ENCODE measurements at regions of chr4 and their contacts with region 1.

Region 1: GRCh38 chr4:88017516-88018297 is 10.3 kb downstream of the PKD2 start:
- DNase-seq: no peak
- H3K4me3 ChIP-seq: peak overlapping the region in 2 of 4 donors; percentile 24 to 26
- H3K27ac ChIP-seq: peak overlapping the region; percentile 90 to 93 (median 92)
- H3K4me1 ChIP-seq: peaks cover 40 to 100% (median 94%) of the 10 kb centered on the region in 4 donors
- H3K27me3 ChIP-seq: no peaks in the 10 kb centered on the region
- CTCF ChIP-seq: no peak
- EP300 ChIP-seq: no peak
- POLR2A ChIP-seq: no peak

Region 2: GRCh38 chr4:87530868-87531267 is 486.8 kb before region 1 on chr4:
- intact Hi-C with region 1: loop called (anchors 10 kb)
- DNase-seq: peak; percentile 96
- H3K4me3 ChIP-seq: peak overlapping the region; percentile 52 to 72 (median 66)
- H3K27ac ChIP-seq: peak overlapping the region; percentile 85 to 97 (median 90)
- H3K4me1 ChIP-seq: peaks cover 15 to 30% (median 30%) of the 10 kb centered on the region in 4 donors
- H3K27me3 ChIP-seq: no peaks in the 10 kb centered on the region
- CTCF ChIP-seq: no peak
- EP300 ChIP-seq: peak; percentile 99
- POLR2A ChIP-seq: no peak